ENCODE measurements at regions of chr2 and their contacts with region 1.

Region 1: DNA sequence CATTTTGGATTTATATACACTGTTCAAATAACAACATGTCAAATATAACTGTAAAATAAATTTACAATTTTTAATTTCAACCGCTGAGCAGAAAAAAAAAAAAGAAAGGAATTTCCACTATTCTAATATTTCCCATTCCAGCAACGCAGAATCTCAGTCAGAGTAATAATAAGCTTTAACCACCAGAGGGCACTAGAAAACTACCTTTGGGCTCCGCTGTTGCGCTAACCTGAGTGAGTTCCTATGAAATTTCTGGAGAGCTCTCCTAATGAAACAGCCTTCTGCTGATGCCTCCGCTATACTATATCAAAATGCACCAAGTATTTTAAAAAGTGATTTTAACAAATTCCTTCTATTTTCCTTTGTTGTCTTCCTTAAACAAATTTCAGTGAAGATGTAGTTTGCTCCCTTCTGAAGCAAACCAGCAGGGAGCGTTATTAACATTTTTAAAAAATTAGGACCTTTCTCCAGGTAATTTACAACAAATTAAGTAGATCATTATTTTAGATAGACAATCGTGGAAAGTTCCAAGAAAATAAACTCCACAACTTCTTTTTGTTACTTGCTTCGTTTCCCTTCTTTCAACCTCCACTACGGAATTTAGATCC is 23.0 kb downstream of the ERMN start:
- DNase-seq: peak; percentile 26
- H3K4me3 Mint-ChIP-seq: no peak overlapping the region
- H3K27ac Mint-ChIP-seq: no peak overlapping the region
- H3K4me1 Mint-ChIP-seq: peaks cover 22% of the 10 kb centered on the region
- H3K27me3 Mint-ChIP-seq: peaks cover 14% of the 10 kb centered on the region

Region 2: GRCh38 chr2:157318884-157319283 is 16.3 kb after region 1 on chr2:
- intact Hi-C with region 1: loop called (anchors 2 kb)
- DNase-seq: no peak
- H3K4me3 Mint-ChIP-seq: no peak overlapping the region
- H3K27ac Mint-ChIP-seq: no peak overlapping the region
- H3K4me1 Mint-ChIP-seq: peaks cover 6% of the 10 kb centered on the region
- H3K27me3 Mint-ChIP-seq: no peaks in the 10 kb centered on the region

Region 3: GRCh38 chr2:157497638-157498314 is 195.2 kb after region 1 on chr2:
- intact Hi-C with region 1: loop called (anchors 2 kb)
- DNase-seq: no peak
- H3K4me3 Mint-ChIP-seq: no peak overlapping the region
- H3K27ac Mint-ChIP-seq: no peak overlapping the region
- H3K4me1 Mint-ChIP-seq: peaks cover 41% of the 10 kb centered on the region
- H3K27me3 Mint-ChIP-seq: no peaks in the 10 kb centered on the region

Region 4: GRCh38 chr2:157777427-157777826 is 474.8 kb after region 1 on chr2:
- intact Hi-C with region 1: loop called (anchors 2 kb)
- DNase-seq: peak; percentile 19
- H3K4me3 Mint-ChIP-seq: no peak overlapping the region
- H3K27ac Mint-ChIP-seq: no peak overlapping the region
- H3K4me1 Mint-ChIP-seq: peaks cover 30% of the 10 kb centered on the region
- H3K27me3 Mint-ChIP-seq: no peaks in the 10 kb centered on the region